ENCODE measurements at regions of chr5 and their contacts with region 1.

Region 1: GRCh38 chr5:134101686-134102439 is 12.6 kb upstream of the TCF7 start:
- DNase-seq: peak; percentile 84
- ATAC-seq: peak; percentile 11
- H3K4me3 Mint-ChIP-seq: no peak overlapping the region
- H3K27ac Mint-ChIP-seq: no peak overlapping the region
- H3K4me1 Mint-ChIP-seq: peaks cover 93% of the 10 kb centered on the region
- H3K27me3 Mint-ChIP-seq: peaks cover 2% of the 10 kb centered on the region

Region 2: DNA sequence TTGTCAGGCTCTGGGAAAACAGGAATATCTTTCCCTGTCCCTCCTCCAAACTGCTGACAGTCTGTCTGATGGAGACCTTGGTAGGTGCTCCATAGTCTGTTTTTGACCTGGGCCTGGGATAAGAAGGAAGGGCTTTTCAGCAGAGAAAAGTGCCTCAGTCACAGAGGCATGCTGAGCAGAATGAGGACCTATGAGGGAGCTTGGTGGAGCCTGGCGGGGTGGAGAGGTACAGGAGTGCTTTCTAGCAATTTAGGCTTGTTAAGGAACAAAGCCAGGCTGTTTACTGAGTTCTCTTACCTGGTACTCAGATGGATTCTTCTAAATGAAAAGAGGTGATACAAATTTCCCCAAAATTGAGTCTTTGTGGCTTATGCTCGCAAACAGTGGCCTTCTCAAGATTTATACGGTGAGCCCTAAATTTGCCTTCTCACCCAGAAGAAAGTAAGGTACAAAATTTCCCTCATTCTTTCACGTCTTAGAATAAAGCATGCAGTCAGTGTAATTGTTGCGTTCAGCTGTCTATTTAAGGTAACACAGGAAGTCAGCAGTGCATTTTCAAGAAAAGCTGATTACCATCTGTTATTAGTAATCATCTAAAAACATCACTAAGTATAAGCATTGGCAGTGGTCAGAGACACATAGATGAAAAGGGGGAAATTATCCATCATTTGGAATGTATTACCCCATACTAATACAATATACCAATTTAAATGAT is 1472.5 kb before region 1 on chr5:
- CTCF ChIA-PET with region 1: no interaction called
- POLR2A ChIA-PET with region 1: no interaction called
- intact Hi-C with region 1: no loop called
- DNase-seq: no peak
- ATAC-seq: peak; percentile 19
- H3K4me3 Mint-ChIP-seq: no peak overlapping the region
- H3K27ac Mint-ChIP-seq: no peak overlapping the region
- H3K4me1 Mint-ChIP-seq: peaks cover 8% of the 10 kb centered on the region
- H3K27me3 Mint-ChIP-seq: no peaks in the 10 kb centered on the region

Region 3: DNA sequence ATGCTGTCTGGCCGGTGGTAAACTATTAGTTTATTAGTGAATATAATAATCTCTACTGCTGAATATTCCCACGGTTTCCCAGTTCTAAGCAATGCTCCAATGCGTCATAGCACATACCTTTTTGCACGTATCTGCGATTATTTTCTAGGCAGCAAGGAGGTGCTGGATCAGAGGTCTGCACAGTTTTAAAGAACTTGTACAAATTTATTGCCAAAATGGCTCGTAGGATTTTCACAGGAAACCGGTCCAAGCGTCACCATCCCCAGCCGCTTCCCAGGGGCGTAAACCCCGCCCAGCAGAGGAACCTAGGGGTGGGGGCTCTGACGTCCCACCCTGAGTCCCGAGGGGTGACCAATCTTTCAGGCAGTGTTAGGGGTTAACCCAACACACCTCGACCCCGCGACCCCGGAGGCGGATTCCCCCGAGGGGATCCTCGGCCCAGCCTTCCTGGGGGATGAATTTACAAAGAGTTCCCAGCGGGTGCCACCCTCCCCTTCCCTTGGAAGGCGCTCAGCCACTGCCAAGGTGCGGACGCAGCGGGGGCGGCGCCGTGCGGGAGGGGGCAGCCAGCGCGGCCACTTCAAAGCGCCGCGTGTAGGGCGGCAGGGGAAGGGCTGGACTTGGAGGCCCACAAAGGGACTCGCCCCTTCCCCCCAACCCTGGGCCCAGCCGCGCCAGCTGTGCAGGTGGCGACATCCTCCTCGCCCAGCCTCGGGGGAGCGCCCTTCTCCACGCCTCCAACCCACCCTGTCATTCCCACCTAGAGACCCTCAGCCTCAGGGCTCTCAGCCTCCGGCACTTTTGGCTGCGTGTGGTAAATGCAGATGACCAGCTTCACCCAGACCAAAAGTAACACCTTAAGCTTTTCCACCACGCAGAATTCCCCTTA is 30.9 kb before region 1 on chr5:
- CTCF ChIA-PET with region 1: interaction called, 52 read pairs
- POLR2A ChIA-PET with region 1: interaction called, 6 read pairs
- intact Hi-C with region 1: loop called (anchors 1 kb)
- DNase-seq: peak; percentile 77
- ATAC-seq: peak; percentile 1
- H3K4me3 Mint-ChIP-seq: peak overlapping the region; percentile 73
- H3K27ac Mint-ChIP-seq: peak overlapping the region; percentile 89
- H3K4me1 Mint-ChIP-seq: peaks cover 68% of the 10 kb centered on the region
- H3K27me3 Mint-ChIP-seq: no peaks in the 10 kb centered on the region

Region 4: GRCh38 chr5:134086943-134087305 is 14.9 kb before region 1 on chr5:
- CTCF ChIA-PET with region 1: interaction called, 83 read pairs
- POLR2A ChIA-PET with region 1: interaction called, 10 read pairs
- intact Hi-C with region 1: loop called (anchors 1 kb)
- DNase-seq: peak; percentile 90
- ATAC-seq: peak; percentile 87
- H3K4me3 Mint-ChIP-seq: peak overlapping the region; percentile 46
- H3K27ac Mint-ChIP-seq: peak overlapping the region; percentile 93
- H3K4me1 Mint-ChIP-seq: peaks cover 84% of the 10 kb centered on the region
- H3K27me3 Mint-ChIP-seq: peaks cover 1% of the 10 kb centered on the region

Region 5: GRCh38 chr5:134125039-134126015 is 23.5 kb after region 1 on chr5:
- CTCF ChIA-PET with region 1: interaction called, 34 read pairs
- POLR2A ChIA-PET with region 1: interaction called, 4 read pairs
- intact Hi-C with region 1: no loop called
- DNase-seq: peak; percentile 54
- ATAC-seq: no peak
- H3K4me3 Mint-ChIP-seq: peak overlapping the region; percentile 52
- H3K27ac Mint-ChIP-seq: peak overlapping the region; percentile 91
- H3K4me1 Mint-ChIP-seq: peaks cover 100% of the 10 kb centered on the region
- H3K27me3 Mint-ChIP-seq: no peaks in the 10 kb centered on the region

Region 6: GRCh38 chr5:134140530-134141201 is 38.8 kb after region 1 on chr5:
- CTCF ChIA-PET with region 1: interaction called, 106 read pairs
- POLR2A ChIA-PET with region 1: interaction called, 6 read pairs
- intact Hi-C with region 1: loop called (anchors 1 kb)
- DNase-seq: peak; percentile 82
- ATAC-seq: peak; percentile 42
- H3K4me3 Mint-ChIP-seq: no peak overlapping the region
- H3K27ac Mint-ChIP-seq: no peak overlapping the region
- H3K4me1 Mint-ChIP-seq: peaks cover 69% of the 10 kb centered on the region
- H3K27me3 Mint-ChIP-seq: no peaks in the 10 kb centered on the region

Region 7: GRCh38 chr5:134345996-134346395 is 244.1 kb after region 1 on chr5:
- CTCF ChIA-PET with region 1: no interaction called
- POLR2A ChIA-PET with region 1: no interaction called
- intact Hi-C with region 1: no loop called
- DNase-seq: no peak
- ATAC-seq: no peak
- H3K4me3 Mint-ChIP-seq: no peak overlapping the region
- H3K27ac Mint-ChIP-seq: no peak overlapping the region
- H3K4me1 Mint-ChIP-seq: no peaks in the 10 kb centered on the region
- H3K27me3 Mint-ChIP-seq: no peaks in the 10 kb centered on the region

Region 8: DNA sequence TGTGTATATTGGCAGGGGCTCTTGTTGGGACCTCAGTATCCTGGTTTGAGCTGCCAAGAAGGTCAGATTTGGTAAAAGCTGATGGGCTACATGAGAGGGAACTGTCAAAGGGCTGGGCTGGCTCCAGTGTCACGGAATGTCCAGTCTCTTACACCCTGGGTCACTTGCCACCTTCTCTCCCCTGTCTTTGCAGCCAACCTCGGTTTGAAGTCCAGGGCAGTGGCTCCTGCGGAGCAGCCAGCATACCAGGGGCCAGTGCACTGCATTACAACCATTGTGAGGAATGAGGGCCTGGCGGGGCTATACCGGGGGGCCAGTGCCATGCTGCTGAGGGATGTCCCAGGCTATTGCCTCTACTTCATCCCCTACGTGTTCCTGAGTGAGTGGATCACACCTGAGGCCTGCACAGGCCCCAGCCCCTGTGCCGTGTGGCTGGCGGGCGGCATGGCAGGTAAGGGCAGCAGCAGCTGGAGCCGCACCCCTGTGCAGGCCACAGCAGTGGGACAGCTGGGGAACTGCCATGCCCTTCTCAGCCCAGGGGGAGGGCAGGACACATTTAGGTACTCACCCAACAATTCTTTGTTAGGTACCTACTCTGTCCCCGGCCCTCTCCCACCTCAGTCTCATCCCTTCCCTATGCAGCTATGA is 1769.5 kb after region 1 on chr5:
- CTCF ChIA-PET with region 1: no interaction called
- POLR2A ChIA-PET with region 1: no interaction called
- intact Hi-C with region 1: no loop called
- DNase-seq: no peak
- ATAC-seq: no peak
- H3K4me3 Mint-ChIP-seq: no peak overlapping the region
- H3K27ac Mint-ChIP-seq: no peak overlapping the region
- H3K4me1 Mint-ChIP-seq: no peaks in the 10 kb centered on the region
- H3K27me3 Mint-ChIP-seq: peaks cover 3% of the 10 kb centered on the region

Measured in activated CD4-positive, alpha-beta T cell treated with anti-CD3 and anti-CD28 coated beads for 36 hours (primary cell).